Stomach (tissue), 19 donors: ENCODE measurements at regions of chr16 and their contacts with region 1.

Region 1: DNA sequence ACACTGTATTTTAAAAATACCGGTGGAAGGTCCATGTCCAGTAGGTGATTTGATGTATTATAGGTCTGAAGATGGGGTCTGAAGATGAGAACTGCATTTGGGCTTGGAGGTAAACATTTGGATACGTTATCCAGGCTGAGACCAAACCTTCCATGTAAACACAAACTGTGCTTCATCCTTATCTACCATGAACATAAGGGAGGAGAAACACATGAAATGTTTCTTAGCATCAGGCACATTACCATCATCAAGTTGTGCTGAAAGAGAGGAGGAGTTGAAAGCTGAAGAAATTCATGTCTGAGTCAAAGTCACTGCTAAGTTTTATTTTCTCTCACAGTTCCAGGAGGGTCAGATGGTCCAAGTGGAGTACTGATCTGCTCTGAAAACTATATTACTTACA is 11.4 kb downstream of the SF3B3 start:
- DNase-seq: no peak
- H3K4me3 ChIP-seq: no peak overlapping the region
- H3K27ac ChIP-seq: no peak overlapping the region
- H3K4me1 ChIP-seq: peaks cover 0 to 4% (median 2%) of the 10 kb centered on the region in 4 donors
- H3K27me3 ChIP-seq: no peaks in the 10 kb centered on the region
- CTCF ChIP-seq: no peak
- EP300 ChIP-seq: no peak
- POLR2A ChIP-seq: no peak

Region 2: GRCh38 chr16:70267516-70267915 is 267.5 kb before region 1 on chr16:
- intact Hi-C with region 1: no loop called
- DNase-seq: peak; percentile 35 to 66
- H3K4me3 ChIP-seq: no peak overlapping the region
- H3K27ac ChIP-seq: no peak overlapping the region
- H3K4me1 ChIP-seq: no peaks in the 10 kb centered on the region
- H3K27me3 ChIP-seq: no peaks in the 10 kb centered on the region
- CTCF ChIP-seq: peak in 5 of 7 experiments; percentile 17 to 58 (median 50)
- EP300 ChIP-seq: no peak
- POLR2A ChIP-seq: no peak

Region 3: GRCh38 chr16:70653809-70654771 is 119.1 kb after region 1 on chr16:
- intact Hi-C with region 1: loop called (anchors 10 kb)
- DNase-seq: peak; percentile 77 to 95
- H3K4me3 ChIP-seq: peak overlapping the region; percentile 13 to 30 (median 20)
- H3K27ac ChIP-seq: peak overlapping the region in 2 of 5 donors; percentile 24 to 63
- H3K4me1 ChIP-seq: peaks cover 8 to 18% (median 14%) of the 10 kb centered on the region in 4 donors
- H3K27me3 ChIP-seq: no peaks in the 10 kb centered on the region
- CTCF ChIP-seq: peak in 6 of 7 experiments; percentile 28 to 94 (median 91)
- EP300 ChIP-seq: no peak
- POLR2A ChIP-seq: no peak